ENCODE measurements at regions of chr19 and their contacts with region 1.

Region 1: DNA sequence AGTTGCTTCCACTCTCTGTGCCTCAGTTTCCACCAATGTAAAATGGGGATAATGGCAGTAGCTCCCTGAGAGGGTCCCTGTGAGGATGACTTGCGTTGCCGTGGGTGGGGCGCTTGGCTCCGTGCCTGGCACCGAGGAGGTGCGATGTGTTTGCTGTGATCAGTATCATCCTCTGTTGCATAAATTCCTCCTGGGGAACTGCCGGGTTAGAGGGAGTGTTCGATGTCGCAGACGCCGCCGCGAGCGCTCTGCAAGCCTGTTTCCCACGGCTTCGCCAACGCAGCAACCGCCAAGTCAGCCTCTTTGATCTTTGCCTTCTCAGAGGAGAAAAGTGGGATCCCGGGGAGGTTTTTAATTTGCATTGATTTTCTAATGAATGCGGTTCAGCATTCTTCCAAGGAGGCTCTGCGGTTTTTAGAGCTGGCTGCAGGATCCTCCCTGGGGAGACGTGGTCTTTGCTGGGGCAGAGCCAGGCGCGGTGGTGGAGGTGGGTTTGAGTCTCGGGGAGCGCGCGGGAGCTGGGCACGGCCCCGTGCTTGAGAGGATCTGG is 7.6 kb downstream of the GPR32 start:
- DNase-seq: no peak
- H3K4me3 ChIP-seq: no peak overlapping the region
- H3K27ac ChIP-seq: no peak overlapping the region
- H3K4me1 ChIP-seq: no peaks in the 10 kb centered on the region
- H3K27me3 ChIP-seq: peaks cover 55% of the 10 kb centered on the region
- CTCF ChIP-seq: no peak
- POLR2A ChIP-seq: no peak

Region 2: DNA sequence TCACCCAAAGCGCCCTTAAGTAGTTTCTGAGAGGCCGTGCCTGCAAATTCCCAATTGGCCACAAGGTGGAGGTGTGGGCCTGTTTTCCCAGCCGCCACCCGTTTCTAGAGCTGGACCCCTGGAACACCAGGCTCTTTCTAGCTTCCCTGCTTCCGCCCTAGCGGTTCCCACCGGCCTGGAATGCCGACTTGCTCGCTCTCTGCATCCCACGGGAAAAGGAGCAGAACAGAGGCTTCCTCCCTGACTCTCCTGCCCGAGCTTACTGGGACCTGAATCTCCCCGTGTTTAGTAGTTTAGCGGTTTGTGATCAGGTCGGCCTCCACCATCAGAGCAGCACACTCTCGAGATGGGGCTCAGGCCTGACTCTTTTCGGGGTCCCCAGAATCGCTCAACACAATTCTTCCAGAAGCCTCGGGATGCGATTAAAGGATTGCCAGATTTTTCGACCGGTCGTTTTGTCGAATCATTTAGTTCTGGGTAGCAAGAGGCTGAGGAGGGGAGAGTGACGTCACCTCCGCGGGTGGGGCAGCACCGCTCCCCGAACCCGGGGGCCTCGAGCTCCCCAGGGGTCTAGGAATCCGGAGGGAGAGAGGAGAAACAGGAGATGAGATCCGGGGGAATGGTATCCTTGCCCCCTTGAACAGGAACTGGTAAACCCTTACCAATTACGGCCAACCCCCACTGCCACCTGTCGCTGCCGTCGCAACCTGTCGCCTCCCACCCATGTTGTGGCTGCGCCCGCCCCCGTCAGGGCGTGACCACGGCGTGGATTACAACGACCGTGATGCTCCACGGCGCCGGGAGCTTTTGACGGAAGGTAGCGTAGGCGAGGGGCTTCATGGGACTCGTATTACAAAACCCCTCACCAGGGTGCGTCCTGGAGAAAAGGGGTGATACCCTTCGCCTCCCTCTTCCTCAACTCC is 420.4 kb before region 1 on chr19:
- intact Hi-C with region 1: loop called in 1 of 2 experiments (anchors 10 kb)
- DNase-seq: peak; percentile 44 to 91 (median 70)
- H3K4me3 ChIP-seq: peak overlapping the region in 2 of 4 donors; percentile 19 to 49
- H3K27ac ChIP-seq: peak overlapping the region in 4 of 5 donors; percentile 22 to 77 (median 64)
- H3K4me1 ChIP-seq: no peaks in the 10 kb centered on the region
- H3K27me3 ChIP-seq: no peaks in the 10 kb centered on the region
- CTCF ChIP-seq: peak; percentile 75 to 88 (median 79)
- POLR2A ChIP-seq: no peak

Region 3: GRCh38 chr19:50537762-50538230 is 240.0 kb before region 1 on chr19:
- intact Hi-C with region 1: loop called in 1 of 2 experiments (anchors 5 kb)
- DNase-seq: peak; percentile 50 to 90 (median 69)
- H3K4me3 ChIP-seq: no peak overlapping the region
- H3K27ac ChIP-seq: no peak overlapping the region
- H3K4me1 ChIP-seq: no peaks in the 10 kb centered on the region
- H3K27me3 ChIP-seq: peaks cover 4% of the 10 kb centered on the region
- CTCF ChIP-seq: peak; percentile 33 to 61 (median 57)
- POLR2A ChIP-seq: no peak

Region 4: DNA sequence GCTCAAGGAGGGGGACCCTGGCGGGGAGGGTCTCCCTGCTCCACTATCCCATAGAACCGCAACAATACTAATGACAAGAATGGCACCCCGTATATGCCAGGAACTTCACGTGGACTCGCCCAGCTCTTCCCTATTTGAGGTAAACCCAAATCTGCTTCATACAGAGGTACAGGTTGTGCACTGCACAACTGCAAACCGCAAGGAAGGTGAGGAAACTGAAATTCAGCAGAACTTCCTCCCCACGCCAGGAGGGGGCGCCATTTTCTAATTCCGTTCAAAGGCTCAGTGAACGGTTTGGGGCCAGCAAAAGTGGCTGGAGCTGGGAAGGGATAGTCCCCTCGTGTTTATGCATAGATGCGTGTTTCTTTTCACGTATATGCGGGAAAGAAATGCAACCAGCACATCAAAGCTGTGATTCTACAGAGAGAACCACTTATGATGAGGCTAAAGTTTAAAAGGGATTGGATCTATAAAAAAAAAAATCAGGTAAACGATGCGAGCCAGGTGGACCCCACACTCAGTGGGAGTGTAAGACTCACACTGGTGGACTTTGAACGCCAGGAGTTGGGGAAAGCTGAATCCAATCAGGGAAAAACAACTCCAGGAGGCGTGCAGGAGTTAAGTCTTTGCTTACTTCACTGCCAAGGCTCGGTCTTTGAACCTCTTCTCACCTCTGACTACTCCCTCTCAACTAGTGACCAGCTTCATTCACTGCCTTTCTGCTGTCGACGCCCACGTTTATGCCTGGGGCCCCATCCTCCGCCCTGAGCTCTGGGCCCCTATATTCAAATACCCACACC is 108.3 kb before region 1 on chr19:
- intact Hi-C with region 1: loop called in 1 of 2 experiments (anchors 5 kb)
- DNase-seq: peak in 5 of 7 donors; percentile 31 to 70 (median 48)
- H3K4me3 ChIP-seq: no peak overlapping the region
- H3K27ac ChIP-seq: no peak overlapping the region
- H3K4me1 ChIP-seq: no peaks in the 10 kb centered on the region
- H3K27me3 ChIP-seq: peaks cover 35% of the 10 kb centered on the region
- CTCF ChIP-seq: peak; percentile 52 to 83 (median 72)
- POLR2A ChIP-seq: no peak

Region 5: GRCh38 chr19:50705422-50706019 is 72.3 kb before region 1 on chr19:
- intact Hi-C with region 1: loop called (anchors 5 kb)
- DNase-seq: peak in 6 of 7 donors; percentile 48 to 62 (median 58)
- H3K4me3 ChIP-seq: no peak overlapping the region
- H3K27ac ChIP-seq: no peak overlapping the region
- H3K4me1 ChIP-seq: no peaks in the 10 kb centered on the region
- H3K27me3 ChIP-seq: no peaks in the 10 kb centered on the region
- CTCF ChIP-seq: peak; percentile 52 to 77 (median 69)
- POLR2A ChIP-seq: no peak

Region 6: DNA sequence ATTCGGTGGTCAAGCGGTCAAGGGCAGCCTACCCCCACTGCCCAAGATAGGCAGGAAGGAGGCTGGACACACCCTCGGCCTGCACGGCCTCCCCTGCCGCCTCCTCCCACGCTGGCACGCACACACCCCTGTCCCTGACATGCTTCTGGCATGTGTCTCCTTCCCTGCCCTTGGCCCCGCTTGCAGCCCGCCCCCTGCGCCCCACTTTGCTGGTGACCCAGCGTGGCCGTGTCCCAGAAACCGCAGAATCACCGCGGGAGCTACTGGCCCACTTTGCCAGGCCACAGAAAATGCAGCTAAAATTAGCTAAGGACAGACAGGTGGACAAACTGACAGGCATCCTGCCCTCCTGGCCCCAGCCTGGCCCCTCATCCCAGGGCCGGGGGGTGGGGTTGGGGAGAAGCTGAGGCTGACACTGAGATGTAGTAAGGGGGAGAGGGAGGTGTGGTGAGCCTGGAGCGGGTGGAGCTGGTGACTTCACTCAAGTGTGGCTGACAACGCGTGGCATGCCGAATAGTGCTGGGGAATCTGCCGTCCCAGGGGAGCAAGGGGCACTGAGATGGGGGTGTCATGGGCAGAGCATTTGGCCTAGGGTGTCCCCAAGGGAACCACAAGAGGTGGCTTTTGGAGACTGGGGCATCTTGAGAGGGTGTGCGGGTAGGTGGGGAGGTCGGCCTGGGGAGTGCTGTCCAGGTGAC is 60.7 kb before region 1 on chr19:
- intact Hi-C with region 1: no loop called
- DNase-seq: peak in 1 of 7 donors; percentile 30
- H3K4me3 ChIP-seq: no peak overlapping the region
- H3K27ac ChIP-seq: no peak overlapping the region
- H3K4me1 ChIP-seq: peaks cover 13 to 33% of the 10 kb centered on the region in 2 donors
- H3K27me3 ChIP-seq: no peaks in the 10 kb centered on the region
- CTCF ChIP-seq: no peak
- POLR2A ChIP-seq: no peak

Region 7: GRCh38 chr19:50815439-50815838 is 37.6 kb after region 1 on chr19:
- intact Hi-C with region 1: no loop called
- DNase-seq: no peak
- H3K4me3 ChIP-seq: no peak overlapping the region
- H3K27ac ChIP-seq: no peak overlapping the region
- H3K4me1 ChIP-seq: peaks cover 0 to 8% of the 10 kb centered on the region in 2 donors
- H3K27me3 ChIP-seq: peaks cover 23% of the 10 kb centered on the region
- CTCF ChIP-seq: no peak
- POLR2A ChIP-seq: no peak

Region 8: GRCh38 chr19:50844296-50844935 is 66.6 kb after region 1 on chr19:
- intact Hi-C with region 1: no loop called
- DNase-seq: no peak
- H3K4me3 ChIP-seq: no peak overlapping the region
- H3K27ac ChIP-seq: no peak overlapping the region
- H3K4me1 ChIP-seq: no peaks in the 10 kb centered on the region
- H3K27me3 ChIP-seq: no peaks in the 10 kb centered on the region
- CTCF ChIP-seq: no peak
- POLR2A ChIP-seq: no peak

Region 9: DNA sequence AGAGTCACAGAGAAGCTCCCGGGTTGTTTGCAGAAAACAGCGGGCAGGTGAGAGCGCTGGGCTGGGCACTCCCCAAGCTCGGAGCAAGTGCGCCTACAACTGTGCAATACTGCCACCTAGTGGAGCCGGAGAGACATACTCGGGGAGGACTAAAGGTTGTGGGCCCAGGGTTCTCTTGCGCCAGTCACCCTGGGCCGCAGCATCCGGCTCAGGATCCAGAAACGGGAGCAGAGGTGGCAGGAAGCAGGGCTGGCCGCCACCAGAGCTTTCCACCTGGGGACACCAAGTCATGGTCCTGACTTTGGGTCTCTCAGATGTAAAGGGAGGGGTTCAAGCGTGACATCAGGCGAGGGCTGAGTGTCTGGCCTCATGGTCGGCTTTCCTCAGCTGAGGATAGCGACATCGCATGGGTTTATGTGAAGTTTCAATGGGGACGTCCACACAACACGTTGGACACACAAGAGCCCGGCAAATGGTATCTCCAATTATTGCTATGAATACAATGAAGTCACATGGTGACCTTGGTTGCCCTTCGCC is 144.6 kb after region 1 on chr19:
- intact Hi-C with region 1: loop called in 1 of 2 experiments (anchors 10 kb)
- DNase-seq: peak; percentile 66 to 85 (median 79)
- H3K4me3 ChIP-seq: no peak overlapping the region
- H3K27ac ChIP-seq: no peak overlapping the region
- H3K4me1 ChIP-seq: peaks cover 0 to 10% of the 10 kb centered on the region in 2 donors
- H3K27me3 ChIP-seq: peaks cover 4% of the 10 kb centered on the region
- CTCF ChIP-seq: peak; percentile 75 to 90 (median 82)
- POLR2A ChIP-seq: no peak